H1 (cell line): ENCODE measurements at regions of chr4 and their contacts with region 1.

Region 1: GRCh38 chr4:77240469-77241066 is 83.6 kb downstream of the CCNG2 start:
- DNase-seq: peak; percentile 65 to 93
- H3K4me3 ChIP-seq: no peak overlapping the region
- H3K27ac ChIP-seq: no peak overlapping the region
- H3K4me1 ChIP-seq: no peaks in the 10 kb centered on the region
- H3K27me3 ChIP-seq: no peaks in the 10 kb centered on the region
- CTCF ChIP-seq: peak; percentile 95 to 97 (median 97)
- EP300 ChIP-seq: no peak
- POLR2A ChIP-seq: no peak
- RAD21 ChIP-seq: peak; percentile 97 to 98

Region 2: DNA sequence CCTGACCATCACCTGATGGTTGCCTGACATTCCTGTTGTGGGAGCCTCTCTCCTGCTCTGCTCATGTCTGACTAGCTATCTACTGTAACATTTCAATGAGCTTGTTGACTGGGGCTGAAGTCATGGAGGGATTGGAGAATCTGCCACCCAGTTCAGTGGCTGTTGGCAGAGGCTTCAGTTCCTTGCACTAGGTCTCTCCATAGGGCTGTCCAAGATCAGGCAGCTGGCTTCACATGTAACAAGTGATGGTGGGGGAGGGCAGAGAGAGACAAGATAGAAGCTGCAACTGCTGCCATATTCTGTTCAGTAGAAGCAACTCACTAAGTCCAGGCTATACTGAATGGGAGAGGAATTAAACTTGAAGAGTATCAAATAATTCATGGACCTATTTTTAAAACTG is 150.7 kb before region 1 on chr4:
- CTCF ChIA-PET with region 1: no interaction called
- POLR2A ChIA-PET with region 1: no interaction called
- DNase-seq: no peak
- H3K4me3 ChIP-seq: no peak overlapping the region
- H3K27ac ChIP-seq: no peak overlapping the region
- H3K4me1 ChIP-seq: no peaks in the 10 kb centered on the region
- H3K27me3 ChIP-seq: no peaks in the 10 kb centered on the region
- CTCF ChIP-seq: no peak
- EP300 ChIP-seq: no peak
- POLR2A ChIP-seq: no peak
- RAD21 ChIP-seq: no peak

Region 3: DNA sequence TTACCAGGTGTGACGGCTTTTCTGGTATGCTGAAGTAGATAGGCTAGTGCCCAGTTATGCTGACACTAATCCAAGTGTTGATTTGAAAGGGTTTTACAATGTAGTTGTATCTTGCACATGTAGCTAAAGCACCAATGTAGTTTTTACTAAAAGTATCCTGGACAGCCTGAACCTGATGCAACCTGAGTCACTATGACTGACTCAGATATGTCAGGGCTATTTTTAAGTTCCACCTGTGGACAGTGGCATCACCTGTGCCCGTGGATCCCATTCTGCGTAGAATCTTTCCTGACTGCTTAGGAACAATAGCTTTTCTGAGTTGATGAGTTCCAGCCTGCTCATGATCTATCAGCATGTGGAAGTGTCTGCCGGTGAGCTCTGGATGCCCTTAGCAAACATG is 25.5 kb before region 1 on chr4:
- CTCF ChIA-PET with region 1: interaction called, 11 read pairs
- POLR2A ChIA-PET with region 1: no interaction called
- DNase-seq: no peak
- H3K4me3 ChIP-seq: no peak overlapping the region
- H3K27ac ChIP-seq: no peak overlapping the region
- H3K4me1 ChIP-seq: no peaks in the 10 kb centered on the region
- H3K27me3 ChIP-seq: no peaks in the 10 kb centered on the region; a peak in 1 of 7 replicates
- CTCF ChIP-seq: no peak
- EP300 ChIP-seq: no peak
- POLR2A ChIP-seq: no peak
- RAD21 ChIP-seq: no peak

Region 4: DNA sequence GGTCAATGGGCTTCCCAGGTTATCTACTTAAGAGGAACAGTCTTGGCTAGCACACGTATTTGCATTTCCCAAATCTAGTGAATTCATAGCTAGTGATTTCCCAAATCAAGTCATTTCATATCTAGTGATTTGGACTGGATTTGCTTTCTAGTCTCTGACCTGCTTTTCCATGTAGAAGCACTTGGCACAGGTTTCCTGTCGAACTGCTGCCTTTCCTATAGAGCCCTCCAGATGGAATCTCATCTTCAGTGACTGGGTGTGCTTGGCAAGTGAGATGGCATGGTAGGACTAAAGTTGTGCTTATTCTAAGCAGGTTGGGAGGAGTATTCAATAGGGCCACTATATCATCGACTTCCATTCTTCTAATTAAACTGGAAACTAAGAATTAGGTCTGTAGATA is 11.2 kb after region 1 on chr4:
- CTCF ChIA-PET with region 1: interaction called, 11 read pairs
- POLR2A ChIA-PET with region 1: no interaction called
- DNase-seq: no peak
- H3K4me3 ChIP-seq: no peak overlapping the region
- H3K27ac ChIP-seq: no peak overlapping the region
- H3K4me1 ChIP-seq: no peaks in the 10 kb centered on the region
- H3K27me3 ChIP-seq: peaks cover 0 to 1% (median 0%) of the 10 kb centered on the region in 4 experiments; a peak in 1 of 7 replicates
- CTCF ChIP-seq: no peak
- EP300 ChIP-seq: no peak
- POLR2A ChIP-seq: no peak
- RAD21 ChIP-seq: no peak

Region 5: DNA sequence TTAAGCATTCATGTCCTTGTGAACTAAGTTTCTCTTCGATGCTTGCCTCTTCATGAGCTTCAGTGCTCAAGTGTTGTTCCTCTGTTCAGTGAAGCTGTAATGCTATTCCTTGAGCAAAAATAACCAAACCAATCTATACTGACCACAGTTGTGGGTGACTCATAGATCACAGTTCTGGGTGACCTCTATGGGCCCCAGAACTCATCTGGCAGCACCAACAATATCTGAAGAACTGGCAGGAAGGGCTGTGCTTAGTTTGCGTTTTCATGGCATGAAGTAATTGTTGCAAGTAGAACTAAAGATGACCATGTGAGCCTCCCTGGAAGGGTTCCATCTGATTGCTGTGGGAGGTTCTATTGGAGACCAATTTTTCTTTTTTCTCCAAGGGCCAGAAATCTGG is 22.7 kb after region 1 on chr4:
- CTCF ChIA-PET with region 1: interaction called, 16 read pairs
- POLR2A ChIA-PET with region 1: no interaction called
- DNase-seq: no peak
- H3K4me3 ChIP-seq: no peak overlapping the region
- H3K27ac ChIP-seq: no peak overlapping the region
- H3K4me1 ChIP-seq: no peaks in the 10 kb centered on the region
- H3K27me3 ChIP-seq: 0 out of 7 replicates have a peak, but pooled peaks cover 0 to 2% (median 0%) of the 10 kb centered on the region in 4 experiments
- CTCF ChIP-seq: no peak
- EP300 ChIP-seq: no peak
- POLR2A ChIP-seq: no peak
- RAD21 ChIP-seq: no peak

Region 6: GRCh38 chr4:77273412-77273811 is 32.8 kb after region 1 on chr4:
- CTCF ChIA-PET with region 1: interaction called, 17 read pairs
- POLR2A ChIA-PET with region 1: no interaction called
- DNase-seq: no peak
- H3K4me3 ChIP-seq: no peak overlapping the region
- H3K27ac ChIP-seq: no peak overlapping the region
- H3K4me1 ChIP-seq: no peaks in the 10 kb centered on the region
- H3K27me3 ChIP-seq: no peaks in the 10 kb centered on the region
- CTCF ChIP-seq: no peak
- EP300 ChIP-seq: no peak
- POLR2A ChIP-seq: no peak
- RAD21 ChIP-seq: no peak

Region 7: GRCh38 chr4:77308843-77309242 is 68.3 kb after region 1 on chr4:
- CTCF ChIA-PET with region 1: interaction called, 266 read pairs
- POLR2A ChIA-PET with region 1: interaction called, 4 read pairs
- DNase-seq: no peak
- H3K4me3 ChIP-seq: no peak overlapping the region
- H3K27ac ChIP-seq: no peak overlapping the region
- H3K4me1 ChIP-seq: no peaks in the 10 kb centered on the region
- H3K27me3 ChIP-seq: no peaks in the 10 kb centered on the region; a peak in 1 of 7 replicates
- CTCF ChIP-seq: peak in 2 of 3 experiments; percentile 52 to 65; a peak in 3 of 4 replicates
- EP300 ChIP-seq: no peak
- POLR2A ChIP-seq: no peak
- RAD21 ChIP-seq: peak; percentile 77 to 83

Region 8: GRCh38 chr4:77347341-77347966 is 106.9 kb after region 1 on chr4:
- CTCF ChIA-PET with region 1: interaction called, 83 read pairs
- POLR2A ChIA-PET with region 1: no interaction called
- DNase-seq: no peak
- H3K4me3 ChIP-seq: no peak overlapping the region
- H3K27ac ChIP-seq: no peak overlapping the region
- H3K4me1 ChIP-seq: peaks cover 0 to 6% (median 1%) of the 10 kb centered on the region in 4 experiments; a peak in 1 of 7 replicates
- H3K27me3 ChIP-seq: no peaks in the 10 kb centered on the region
- CTCF ChIP-seq: no peak
- EP300 ChIP-seq: no peak
- POLR2A ChIP-seq: no peak
- RAD21 ChIP-seq: no peak